Esophagus squamous epithelium (tissue), 5 donors: ENCODE measurements at regions of chr3 and their contacts with region 1.

Region 1: DNA sequence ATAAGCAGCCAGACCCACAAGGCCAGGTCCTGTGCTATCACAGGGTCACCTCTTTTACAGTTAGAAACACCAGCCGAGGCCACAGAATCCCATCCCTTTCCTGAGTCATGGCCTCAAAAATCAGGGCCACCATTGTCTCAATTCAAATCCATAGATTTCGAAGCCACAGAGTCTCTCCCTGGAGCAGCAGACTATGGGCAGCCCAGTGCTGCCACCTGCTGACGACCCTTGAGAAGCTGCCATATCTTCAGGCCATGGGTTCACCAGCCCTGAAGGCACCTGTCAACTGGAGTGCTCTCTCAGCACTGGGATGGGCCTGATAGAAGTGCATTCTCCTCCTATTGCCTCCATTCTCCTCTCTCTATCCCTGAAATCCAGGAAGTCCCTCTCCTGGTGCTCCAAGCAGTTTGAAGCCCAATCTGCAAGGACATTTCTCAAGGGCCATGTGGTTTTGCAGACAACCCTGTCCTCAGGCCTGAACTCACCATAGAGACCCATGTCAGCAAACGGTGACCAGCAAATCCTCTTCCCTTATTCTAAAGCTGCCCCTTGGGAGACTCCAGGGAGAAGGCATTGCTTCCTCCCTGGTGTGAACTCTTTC is 39.6 kb downstream of the TGM4 start:
- DNase-seq: no peak
- H3K4me3 ChIP-seq: no peak overlapping the region
- H3K27ac ChIP-seq: no peak overlapping the region
- H3K4me1 ChIP-seq: peaks cover 0 to 7% (median 0%) of the 10 kb centered on the region in 3 donors
- H3K27me3 ChIP-seq: peaks cover 0 to 12% (median 2%) of the 10 kb centered on the region in 4 donors
- CTCF ChIP-seq: peak; percentile 35 to 85 (median 76)
- POLR2A ChIP-seq: no peak

Region 2: GRCh38 chr3:45037734-45038455 is 123.9 kb after region 1 on chr3:
- intact Hi-C with region 1: loop called (anchors 10 kb)
- DNase-seq: peak; percentile 61
- H3K4me3 ChIP-seq: peak overlapping the region in 1 of 4 donors; percentile 45
- H3K27ac ChIP-seq: peak overlapping the region in 3 of 4 donors; percentile 34 to 60 (median 57)
- H3K4me1 ChIP-seq: peaks cover 11 to 58% (median 50%) of the 10 kb centered on the region in 3 donors
- H3K27me3 ChIP-seq: peaks cover 0 to 14% (median 0%) of the 10 kb centered on the region in 4 donors
- CTCF ChIP-seq: peak; percentile 87 to 99 (median 98)
- POLR2A ChIP-seq: no peak

Region 3: DNA sequence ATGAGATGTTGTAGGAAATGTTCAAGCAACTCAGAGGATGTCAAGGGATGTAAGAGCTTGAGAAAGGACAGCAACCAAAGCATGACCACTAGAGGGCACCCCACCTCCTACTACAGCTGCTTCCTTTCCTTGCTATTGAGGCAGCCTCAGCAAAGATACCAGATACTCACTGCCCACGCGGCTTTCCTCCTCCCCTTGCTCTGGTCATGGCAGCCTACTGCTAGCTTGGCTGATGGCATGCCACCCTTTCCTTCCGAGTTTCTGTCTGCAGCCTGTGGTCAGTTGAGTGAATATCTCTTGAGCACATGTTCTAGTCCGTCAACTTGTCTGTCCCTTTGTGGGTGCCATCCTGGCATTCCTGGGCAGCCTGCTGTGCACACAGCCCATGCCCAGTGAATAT is 1024.9 kb after region 1 on chr3:
- intact Hi-C with region 1: no loop called
- DNase-seq: peak; percentile 29
- H3K4me3 ChIP-seq: no peak overlapping the region
- H3K27ac ChIP-seq: no peak overlapping the region
- H3K4me1 ChIP-seq: peaks cover 0 to 27% (median 5%) of the 10 kb centered on the region in 3 donors
- H3K27me3 ChIP-seq: no peaks in the 10 kb centered on the region
- CTCF ChIP-seq: peak; percentile 83 to 92 (median 86)
- POLR2A ChIP-seq: no peak